ENCODE measurements at regions of chr11 and their contacts with region 1.

Region 1: DNA sequence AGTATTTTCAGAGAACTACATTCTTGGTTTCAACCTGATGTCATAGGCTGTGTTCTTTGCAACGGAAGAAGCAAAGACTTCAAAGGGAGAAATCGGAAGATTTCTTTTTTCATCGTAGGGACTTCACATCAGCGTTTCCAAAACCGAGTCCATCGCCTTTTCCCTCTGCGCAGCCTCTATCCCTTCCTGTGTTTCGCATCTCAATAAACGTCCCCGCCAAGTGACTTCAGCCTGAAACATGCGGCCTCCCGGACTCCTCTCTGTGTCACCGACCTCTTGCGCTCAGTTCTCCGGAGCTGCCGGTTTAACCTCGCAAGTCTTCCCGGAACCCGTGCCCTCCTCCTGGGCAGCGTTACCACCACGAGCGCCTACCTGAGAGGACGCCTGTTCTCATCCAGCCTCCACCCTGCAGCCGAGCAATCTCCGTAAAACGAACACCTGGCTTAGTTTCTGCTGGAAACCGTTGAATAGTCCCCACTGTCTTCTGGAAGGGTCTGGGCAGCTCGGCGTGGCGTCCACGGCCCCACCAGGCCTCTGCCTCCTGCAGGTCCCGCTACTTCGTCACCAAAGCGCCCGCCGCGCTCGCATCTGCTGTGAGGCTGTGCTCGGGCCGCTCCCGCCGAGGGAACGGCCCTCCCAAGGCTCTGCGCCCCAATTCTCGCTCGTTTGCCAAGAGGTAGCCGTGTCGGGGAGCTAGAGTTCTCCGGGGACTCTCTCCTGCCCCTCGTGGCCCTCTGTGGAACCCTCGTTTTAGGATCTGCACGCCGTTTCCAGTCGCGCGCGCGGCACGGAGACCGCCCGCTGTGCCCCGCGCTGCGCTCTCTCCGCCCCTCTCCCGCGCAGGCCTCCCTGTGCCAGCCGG is at the start of gene GLB1L3:
- DNase-seq: peak; percentile 90
- ATAC-seq: peak; percentile 93
- H3K4me3 Mint-ChIP-seq: peak within 1 kb of the TSS; percentile 96
- H3K27ac Mint-ChIP-seq: peak within 1 kb of the TSS; percentile 93
- H3K4me1 Mint-ChIP-seq: peaks cover 49% of the 10 kb centered on the region
- H3K27me3 Mint-ChIP-seq: peaks cover 4% of the 10 kb centered on the region
- total RNA-seq, gene GLB1L3: 4.1 to 6.1 TPM

Region 2: GRCh38 chr11:134164490-134165370 is 111.0 kb before region 1 on chr11:
- CTCF ChIA-PET with region 1: no interaction called
- DNase-seq: no peak
- ATAC-seq: no peak
- H3K4me3 Mint-ChIP-seq: no peak overlapping the region
- H3K27ac Mint-ChIP-seq: no peak overlapping the region
- H3K4me1 Mint-ChIP-seq: no peaks in the 10 kb centered on the region
- H3K27me3 Mint-ChIP-seq: no peaks in the 10 kb centered on the region

Region 3: DNA sequence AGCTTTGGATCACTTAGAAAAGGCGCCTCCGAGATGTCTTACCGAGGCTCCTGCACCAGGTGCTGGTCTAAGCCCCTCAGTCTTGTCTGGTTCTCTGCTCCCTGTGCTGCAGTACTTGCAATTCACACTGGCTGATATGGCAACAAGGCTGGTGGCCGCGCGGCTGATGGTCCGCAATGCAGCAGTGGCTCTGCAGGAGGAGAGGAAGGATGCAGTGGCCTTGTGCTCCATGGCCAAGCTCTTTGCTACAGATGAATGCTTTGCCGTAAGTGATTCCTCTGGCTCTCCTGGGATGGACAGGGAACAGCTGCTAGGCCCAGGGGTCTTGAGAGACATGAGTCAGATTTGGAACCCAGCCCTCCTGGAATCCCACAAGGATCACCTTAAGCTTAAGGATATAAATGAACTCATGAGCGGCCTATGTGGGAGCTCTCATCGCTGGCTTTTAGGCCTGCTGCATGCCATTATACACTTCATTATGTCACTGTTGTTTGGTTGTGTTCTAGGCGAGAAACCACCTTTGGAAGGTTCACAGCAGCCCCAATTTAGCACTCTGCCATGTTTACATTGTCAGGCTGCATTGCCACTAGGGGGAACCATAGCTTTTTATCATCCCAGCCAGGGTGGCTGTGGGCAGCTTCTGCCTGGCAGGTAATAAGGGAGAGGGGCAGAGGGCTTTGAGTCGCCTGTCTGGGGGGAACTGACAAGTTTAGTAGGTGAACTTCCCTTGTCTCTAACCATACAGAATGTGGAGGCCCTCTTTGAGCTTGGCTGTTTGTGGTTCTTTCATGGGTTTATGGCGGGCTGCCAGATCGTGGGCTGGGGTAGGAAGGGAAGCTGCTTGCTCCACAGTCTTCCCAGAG is 13.9 kb before region 1 on chr11:
- CTCF ChIA-PET with region 1: interaction called, 62 read pairs
- DNase-seq: peak; percentile 56
- ATAC-seq: peak; percentile 79
- H3K4me3 Mint-ChIP-seq: no peak overlapping the region
- H3K27ac Mint-ChIP-seq: no peak overlapping the region
- H3K4me1 Mint-ChIP-seq: peaks cover 18% of the 10 kb centered on the region
- H3K27me3 Mint-ChIP-seq: no peaks in the 10 kb centered on the region

Region 4: DNA sequence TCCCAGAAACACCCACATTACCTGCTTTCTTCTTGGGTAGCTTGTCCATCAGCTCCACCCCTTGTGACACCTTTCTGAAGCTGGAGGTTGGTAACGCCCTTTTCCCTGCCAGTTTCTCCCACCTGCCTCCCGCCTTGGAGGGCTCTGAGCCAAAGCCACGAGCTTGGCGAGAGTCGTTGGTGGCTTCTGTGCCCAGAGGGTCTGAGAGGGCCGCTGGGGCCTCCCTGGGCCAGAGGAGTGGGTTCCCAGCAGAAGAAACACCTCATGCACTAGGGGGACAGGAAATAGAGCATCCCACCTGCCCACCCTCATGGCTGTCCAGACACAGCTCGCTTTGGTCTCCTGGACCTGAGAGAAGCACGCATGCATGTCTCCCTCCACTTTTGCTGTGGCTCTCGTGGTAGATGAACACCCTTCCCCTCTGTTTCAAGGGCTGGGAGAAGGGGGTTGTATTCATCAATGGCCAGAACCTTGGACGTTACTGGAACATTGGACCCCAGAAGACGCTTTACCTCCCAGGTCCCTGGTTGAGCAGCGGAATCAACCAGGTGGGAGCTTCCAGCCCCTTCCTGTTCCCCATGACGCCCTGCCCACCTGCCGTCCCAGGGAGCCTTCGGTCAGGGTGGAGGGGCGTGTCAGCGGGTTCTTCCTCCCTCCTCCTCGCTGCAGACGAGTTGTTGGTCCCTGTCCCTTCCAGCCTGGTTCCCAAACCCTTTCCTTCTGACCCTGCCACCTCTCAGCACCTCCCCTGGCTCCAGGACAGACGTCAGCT is 98.6 kb after region 1 on chr11:
- CTCF ChIA-PET with region 1: no interaction called
- DNase-seq: no peak
- ATAC-seq: no peak
- H3K4me3 Mint-ChIP-seq: no peak overlapping the region
- H3K27ac Mint-ChIP-seq: no peak overlapping the region
- H3K4me1 Mint-ChIP-seq: no peaks in the 10 kb centered on the region
- H3K27me3 Mint-ChIP-seq: no peaks in the 10 kb centered on the region

Measured in activated CD8-positive, alpha-beta memory T cell treated with anti-CD3 and anti-CD28 coated beads, Interleukin-2, amount 10 ng/mL, durations not matched to agents 7 days and 5 days (primary cell).